ENCODE measurements at regions of chr1 and their contacts with region 1.

Region 1: GRCh38 chr1:43946236-43947060 is at the start of gene IPO13:
- DNase-seq: peak; percentile 98
- H3K4me3 Mint-ChIP-seq: peak within 1 kb of the TSS; percentile 88
- H3K27ac Mint-ChIP-seq: peak within 1 kb of the TSS; percentile 87
- H3K4me1 Mint-ChIP-seq: peaks cover 41% of the 10 kb centered on the region
- H3K27me3 Mint-ChIP-seq: no peaks in the 10 kb centered on the region
- total RNA-seq, gene IPO13: 13.3 TPM

Region 2: DNA sequence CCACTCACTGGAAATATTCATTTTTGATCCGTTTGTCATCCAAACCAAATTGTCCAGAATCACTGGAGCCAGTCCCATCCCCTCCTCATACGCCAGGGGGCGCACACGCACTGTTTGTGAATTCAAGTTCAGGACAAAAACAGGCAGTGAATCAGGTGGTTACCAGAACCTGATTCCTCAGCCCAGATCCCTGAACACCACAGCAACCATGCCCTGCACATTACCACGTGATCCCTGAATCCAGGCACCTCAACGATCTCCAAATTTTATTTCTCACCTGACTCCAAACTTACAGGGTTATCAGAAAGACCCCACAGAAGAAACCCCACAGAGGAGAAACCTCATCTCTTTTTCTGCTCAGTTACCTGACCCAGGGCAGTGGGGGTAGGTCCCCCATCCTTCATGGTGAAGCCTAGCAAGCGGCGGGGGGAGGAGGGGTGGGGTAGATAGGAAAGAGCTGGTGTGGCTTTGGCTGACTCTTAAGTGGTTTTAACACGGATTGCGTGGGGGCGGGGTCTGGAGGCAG is 417.2 kb before region 1 on chr1:
- CTCF ChIA-PET with region 1: interaction called, 7 read pairs
- POLR2A ChIA-PET with region 1: no interaction called
- intact Hi-C with region 1: loop called (anchors 5 kb)
- DNase-seq: peak; percentile 87
- H3K4me3 Mint-ChIP-seq: no peak overlapping the region
- H3K27ac Mint-ChIP-seq: no peak overlapping the region
- H3K4me1 Mint-ChIP-seq: peaks cover 16% of the 10 kb centered on the region
- H3K27me3 Mint-ChIP-seq: peaks cover 37% of the 10 kb centered on the region

Region 3: DNA sequence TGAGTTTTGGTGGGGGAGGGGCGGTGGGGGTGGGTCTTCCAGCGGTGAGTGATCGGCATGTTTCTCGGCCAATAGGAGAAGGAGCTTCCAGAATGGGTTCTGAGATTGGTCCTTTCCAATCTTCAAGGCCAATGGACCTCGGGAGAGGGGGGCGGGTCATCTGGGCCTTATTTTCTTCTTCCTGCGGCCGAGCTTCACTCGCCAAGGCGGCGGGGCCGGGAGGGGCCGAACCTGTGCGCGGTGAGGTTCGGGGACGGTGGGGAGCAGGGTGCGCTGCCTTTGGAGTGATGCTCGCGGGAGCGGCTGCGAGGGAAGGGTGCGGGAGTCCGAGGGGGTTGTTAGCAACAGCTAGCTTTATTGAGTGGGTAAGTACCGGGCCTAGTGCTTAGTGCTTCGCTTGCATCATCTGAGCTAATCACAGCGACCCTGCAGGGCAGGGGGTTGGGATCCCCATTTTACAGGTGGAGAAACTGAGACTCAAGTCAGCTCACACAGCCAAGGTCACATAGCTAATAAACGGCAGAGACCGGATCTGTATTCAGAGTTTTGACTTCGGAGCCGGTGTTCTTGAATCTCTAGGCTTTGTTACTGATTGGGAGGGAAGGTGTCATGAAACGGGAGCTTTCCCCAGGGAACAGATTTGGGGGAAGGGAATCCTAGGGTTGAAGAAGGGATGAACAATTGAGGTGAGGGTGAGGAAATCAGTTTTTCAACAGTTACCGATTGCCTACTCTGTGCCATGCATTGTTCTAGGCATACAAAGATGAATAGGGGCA is 295.9 kb before region 1 on chr1:
- CTCF ChIA-PET with region 1: interaction called, 6 read pairs
- POLR2A ChIA-PET with region 1: no interaction called
- intact Hi-C with region 1: loop called (anchors 1 kb)
- DNase-seq: peak; percentile 94
- H3K4me3 Mint-ChIP-seq: peak overlapping the region; percentile 99
- H3K27ac Mint-ChIP-seq: peak overlapping the region; percentile 98
- H3K4me1 Mint-ChIP-seq: peaks cover 30% of the 10 kb centered on the region
- H3K27me3 Mint-ChIP-seq: no peaks in the 10 kb centered on the region

Region 4: GRCh38 chr1:43706598-43707495 is 239.6 kb before region 1 on chr1:
- CTCF ChIA-PET with region 1: no interaction called
- POLR2A ChIA-PET with region 1: interaction called, 4 read pairs
- intact Hi-C with region 1: loop called (anchors 1 kb)
- DNase-seq: peak; percentile 95
- H3K4me3 Mint-ChIP-seq: peak overlapping the region; percentile 85
- H3K27ac Mint-ChIP-seq: peak overlapping the region; percentile 58
- H3K4me1 Mint-ChIP-seq: peaks cover 29% of the 10 kb centered on the region
- H3K27me3 Mint-ChIP-seq: no peaks in the 10 kb centered on the region

Region 5: GRCh38 chr1:43731867-43732531 is 214.4 kb before region 1 on chr1:
- CTCF ChIA-PET with region 1: no interaction called
- POLR2A ChIA-PET with region 1: no interaction called
- intact Hi-C with region 1: no loop called
- DNase-seq: no peak
- H3K4me3 Mint-ChIP-seq: no peak overlapping the region
- H3K27ac Mint-ChIP-seq: no peak overlapping the region
- H3K4me1 Mint-ChIP-seq: no peaks in the 10 kb centered on the region
- H3K27me3 Mint-ChIP-seq: no peaks in the 10 kb centered on the region

Region 6: DNA sequence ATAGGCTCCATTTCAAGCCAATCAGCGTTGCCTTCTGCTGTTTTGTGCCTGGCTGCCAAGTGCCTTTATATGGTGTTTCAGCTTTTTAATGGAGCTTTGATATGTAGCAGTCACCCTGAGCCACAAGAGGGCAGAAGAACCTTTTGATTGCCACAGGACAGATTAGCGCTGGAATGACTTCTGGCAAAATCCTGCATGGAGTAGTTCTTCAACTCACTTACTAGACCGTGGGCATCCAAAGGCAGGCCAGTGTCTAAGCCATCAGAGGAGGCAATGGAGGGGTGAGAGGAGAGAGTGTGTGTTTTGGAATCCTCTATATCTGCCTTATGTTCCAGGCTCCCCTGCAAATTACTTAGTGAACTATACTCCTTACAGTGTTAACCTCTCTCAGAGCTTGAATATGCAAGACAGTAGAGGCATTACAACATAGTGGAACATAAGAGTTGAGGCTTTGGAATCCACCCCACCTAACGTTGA is 182.9 kb before region 1 on chr1:
- CTCF ChIA-PET with region 1: interaction called, 39 read pairs
- POLR2A ChIA-PET with region 1: no interaction called
- intact Hi-C with region 1: loop called (anchors 1 kb)
- DNase-seq: peak; percentile 53
- H3K4me3 Mint-ChIP-seq: no peak overlapping the region
- H3K27ac Mint-ChIP-seq: no peak overlapping the region
- H3K4me1 Mint-ChIP-seq: no peaks in the 10 kb centered on the region
- H3K27me3 Mint-ChIP-seq: no peaks in the 10 kb centered on the region

Region 7: GRCh38 chr1:43974443-43975248 is 28.2 kb after region 1 on chr1 and contains the start of gene ATP6V0B:
- CTCF ChIA-PET with region 1: interaction called, 12 read pairs
- POLR2A ChIA-PET with region 1: interaction called, 7 read pairs
- intact Hi-C with region 1: loop called (anchors 1 kb)
- DNase-seq: peak; percentile 98
- H3K4me3 Mint-ChIP-seq: peak within 1 kb of the TSS; percentile 83
- H3K27ac Mint-ChIP-seq: peak within 1 kb of the TSS; percentile 89
- H3K4me1 Mint-ChIP-seq: peaks cover 57% of the 10 kb centered on the region
- H3K27me3 Mint-ChIP-seq: no peaks in the 10 kb centered on the region
- total RNA-seq, gene ATP6V0B: 84.8 to 85.1 TPM

Region 8: DNA sequence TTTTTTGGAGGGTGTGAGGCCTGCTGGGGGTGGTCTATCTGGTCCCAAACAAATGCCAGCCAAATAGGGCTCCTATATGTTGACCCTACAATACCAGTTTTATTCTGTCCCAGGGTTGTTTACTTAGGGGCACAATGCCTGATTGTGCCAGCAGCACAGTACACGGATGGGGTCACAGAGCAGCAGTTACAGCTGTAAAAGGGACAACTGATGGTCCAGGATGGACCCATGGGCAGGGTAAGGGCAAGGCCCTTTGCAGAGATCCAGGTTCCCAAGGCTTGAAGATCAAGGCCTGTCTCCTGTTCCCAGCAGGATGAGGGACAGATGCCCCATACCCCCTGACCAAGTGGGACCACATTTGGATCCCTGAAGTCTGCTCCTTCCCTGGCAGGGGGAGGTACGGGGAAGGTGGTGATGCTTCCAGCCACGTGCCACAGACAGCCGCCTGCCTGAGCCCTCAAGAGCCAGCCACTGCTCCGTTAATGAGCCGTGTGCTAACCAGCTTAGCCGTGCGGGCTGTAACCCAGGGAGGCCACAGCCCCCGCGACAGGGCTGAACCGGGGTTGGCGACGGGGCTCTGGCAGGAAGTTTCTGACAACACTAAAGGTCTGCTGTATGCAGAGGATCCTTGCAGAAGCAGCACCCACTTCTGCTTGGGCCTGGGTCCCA is 66.6 kb after region 1 on chr1:
- CTCF ChIA-PET with region 1: no interaction called
- POLR2A ChIA-PET with region 1: no interaction called
- intact Hi-C with region 1: no loop called
- DNase-seq: no peak
- H3K4me3 Mint-ChIP-seq: no peak overlapping the region
- H3K27ac Mint-ChIP-seq: no peak overlapping the region
- H3K4me1 Mint-ChIP-seq: no peaks in the 10 kb centered on the region
- H3K27me3 Mint-ChIP-seq: no peaks in the 10 kb centered on the region

Region 9: GRCh38 chr1:44029906-44030604 is 83.6 kb after region 1 on chr1:
- CTCF ChIA-PET with region 1: no interaction called
- POLR2A ChIA-PET with region 1: no interaction called
- intact Hi-C with region 1: loop called (anchors 1 kb)
- DNase-seq: peak; percentile 92
- H3K4me3 Mint-ChIP-seq: peak overlapping the region; percentile 94
- H3K27ac Mint-ChIP-seq: peak overlapping the region; percentile 95
- H3K4me1 Mint-ChIP-seq: peaks cover 13% of the 10 kb centered on the region
- H3K27me3 Mint-ChIP-seq: no peaks in the 10 kb centered on the region

Measured in activated CD4-positive, alpha-beta memory T cell treated with anti-CD3 and anti-CD28 coated beads for 36 hours (primary cell).